IMR-90 (cell line): ENCODE measurements at regions of chr3 and their contacts with region 1.

Region 1: GRCh38 chr3:167032261-167032876 is 347.7 kb downstream of the ZBBX start:
- DNase-seq: peak; percentile 39
- ATAC-seq: no peak
- H3K4me3 ChIP-seq: no peak overlapping the region
- H3K27ac ChIP-seq: no peak overlapping the region
- H3K4me1 ChIP-seq: no peaks in the 10 kb centered on the region
- H3K27me3 ChIP-seq: no peaks in the 10 kb centered on the region
- CTCF ChIP-seq: peak; percentile 52
- POLR2A ChIP-seq: no peak
- RAD21 ChIP-seq: peak; percentile 70

Region 2: GRCh38 chr3:165624761-165625160 is 1407.6 kb before region 1 on chr3:
- CTCF ChIA-PET with region 1: no interaction called
- POLR2A ChIA-PET with region 1: no interaction called
- dilution Hi-C with region 1: no loop called
- in situ Hi-C with region 1: no loop called
- intact Hi-C with region 1: loop called (anchors 10 kb)
- DNase-seq: peak; percentile 50
- ATAC-seq: peak; percentile 88
- H3K4me3 ChIP-seq: no peak overlapping the region
- H3K27ac ChIP-seq: no peak overlapping the region
- H3K4me1 ChIP-seq: no peaks in the 10 kb centered on the region
- H3K27me3 ChIP-seq: no peaks in the 10 kb centered on the region
- CTCF ChIP-seq: peak; percentile 63
- POLR2A ChIP-seq: no peak
- RAD21 ChIP-seq: peak; percentile 73

Region 3: DNA sequence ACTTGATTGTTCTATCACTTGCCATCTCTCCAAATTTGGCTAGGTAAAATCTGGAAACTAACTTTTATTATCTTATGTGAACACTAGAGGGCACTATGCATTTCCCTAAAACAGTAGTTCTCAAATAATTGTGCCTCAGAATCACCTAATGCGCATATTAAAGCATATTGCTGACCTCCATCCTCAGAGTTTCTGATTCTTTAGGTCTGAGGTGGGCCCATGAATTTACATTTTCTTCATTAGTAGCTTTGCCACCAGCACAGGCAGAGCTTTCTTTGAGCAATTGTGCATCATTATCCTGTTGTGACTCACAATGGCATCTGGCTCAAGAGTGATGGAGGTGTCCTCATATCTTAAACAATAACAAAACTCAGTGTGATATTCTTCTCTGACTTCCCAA is 1177.7 kb before region 1 on chr3:
- CTCF ChIA-PET with region 1: no interaction called
- POLR2A ChIA-PET with region 1: no interaction called
- dilution Hi-C with region 1: no loop called
- in situ Hi-C with region 1: no loop called
- intact Hi-C with region 1: loop called (anchors 10 kb)
- DNase-seq: no peak
- ATAC-seq: no peak
- H3K4me3 ChIP-seq: no peak overlapping the region
- H3K27ac ChIP-seq: no peak overlapping the region
- H3K4me1 ChIP-seq: no peaks in the 10 kb centered on the region
- H3K27me3 ChIP-seq: no peaks in the 10 kb centered on the region
- CTCF ChIP-seq: peak; percentile 46
- POLR2A ChIP-seq: 0 out of 2 replicates have a peak, but pooled peaks have one; percentile 23
- RAD21 ChIP-seq: peak; percentile 40

Region 4: GRCh38 chr3:166818472-166818871 is 213.9 kb before region 1 on chr3:
- CTCF ChIA-PET with region 1: no interaction called
- POLR2A ChIA-PET with region 1: no interaction called
- dilution Hi-C with region 1: no loop called
- in situ Hi-C with region 1: no loop called
- intact Hi-C with region 1: no loop called
- DNase-seq: no peak
- ATAC-seq: no peak
- H3K4me3 ChIP-seq: no peak overlapping the region
- H3K27ac ChIP-seq: no peak overlapping the region
- H3K4me1 ChIP-seq: no peaks in the 10 kb centered on the region
- H3K27me3 ChIP-seq: no peaks in the 10 kb centered on the region
- CTCF ChIP-seq: no peak
- POLR2A ChIP-seq: no peak
- RAD21 ChIP-seq: no peak